Activated naive CD4-positive, alpha-beta T cell treated with anti-CD3 and anti-CD28 coated beads, Interleukin-2, amount 10 ng/mL, durations not matched to agents 7 days and 5 days (primary cell): ENCODE measurements at regions of chr1 and their contacts with region 1.

Region 1: GRCh38 chr1:94039514-94039870 is 81.5 kb downstream of the ABCA4 start:
- DNase-seq: peak; percentile 68
- H3K4me3 Mint-ChIP-seq: no peak overlapping the region
- H3K27ac Mint-ChIP-seq: no peak overlapping the region
- H3K4me1 Mint-ChIP-seq: no peaks in the 10 kb centered on the region
- H3K27me3 Mint-ChIP-seq: peaks cover 50% of the 10 kb centered on the region

Region 2: GRCh38 chr1:94055459-94056122 is 16.1 kb after region 1 on chr1:
- CTCF ChIA-PET with region 1: interaction called, 33 read pairs
- DNase-seq: no peak
- H3K4me3 Mint-ChIP-seq: no peak overlapping the region
- H3K27ac Mint-ChIP-seq: no peak overlapping the region
- H3K4me1 Mint-ChIP-seq: no peaks in the 10 kb centered on the region
- H3K27me3 Mint-ChIP-seq: peaks cover 49% of the 10 kb centered on the region

Region 3: DNA sequence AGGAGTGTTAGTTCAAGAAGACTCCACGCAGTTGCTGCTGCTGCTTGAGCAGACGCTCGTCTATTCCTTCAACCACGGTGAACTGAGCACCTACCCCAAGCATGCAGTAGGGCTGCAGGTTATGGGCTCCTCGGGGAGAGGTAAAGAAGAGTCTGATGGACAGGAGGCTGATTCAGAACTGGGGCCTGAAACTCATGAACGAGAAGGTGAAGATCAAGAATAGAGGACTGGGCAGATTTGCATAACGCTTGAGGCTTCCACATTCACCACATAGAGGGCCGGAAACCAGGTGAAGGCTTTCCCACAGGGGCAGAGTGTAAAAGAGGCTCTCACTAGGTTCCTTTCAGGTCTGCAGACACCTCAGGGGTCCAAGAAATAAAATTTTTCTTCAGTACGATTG is 72.4 kb after region 1 on chr1:
- CTCF ChIA-PET with region 1: no interaction called
- DNase-seq: no peak
- H3K4me3 Mint-ChIP-seq: no peak overlapping the region
- H3K27ac Mint-ChIP-seq: no peak overlapping the region
- H3K4me1 Mint-ChIP-seq: no peaks in the 10 kb centered on the region
- H3K27me3 Mint-ChIP-seq: peaks cover 25% of the 10 kb centered on the region